Caco-2 (cell line): ENCODE measurements at regions of chr15 and their contacts with region 1.

Region 1: GRCh38 chr15:82809404-82810060 is at the start of gene WHAMM:
- DNase-seq: peak; percentile 97 to 98
- H3K4me3 ChIP-seq: peak within 1 kb of the TSS; percentile 87
- H3K4me3 Mint-ChIP-seq: peak within 1 kb of the TSS; percentile 87
- H3K27ac Mint-ChIP-seq: peak within 1 kb of the TSS; percentile 81
- H3K4me1 ChIP-seq: no peaks in the 10 kb centered on the region
- H3K4me1 Mint-ChIP-seq: peaks cover 9% of the 10 kb centered on the region
- H3K27me3 ChIP-seq: no peaks in the 10 kb centered on the region
- H3K27me3 Mint-ChIP-seq: no peaks in the 10 kb centered on the region
- CTCF ChIP-seq: no peak
- total RNA-seq, gene WHAMM: 7.4 and 7.8 TPM in 2 replicates

Region 2: GRCh38 chr15:82566690-82567089 is 242.8 kb before region 1 on chr15:
- CTCF ChIA-PET with region 1: no interaction called
- POLR2A ChIA-PET with region 1: no interaction called
- intact Hi-C with region 1: loop called (anchors 2 kb)
- DNase-seq: peak; percentile 40 to 63
- H3K4me3 ChIP-seq: no peak overlapping the region
- H3K4me3 Mint-ChIP-seq: peak overlapping the region; percentile 45
- H3K27ac Mint-ChIP-seq: peak overlapping the region; percentile 97
- H3K4me1 ChIP-seq: peaks cover 18% of the 10 kb centered on the region
- H3K4me1 Mint-ChIP-seq: peaks cover 31% of the 10 kb centered on the region
- H3K27me3 ChIP-seq: no peaks in the 10 kb centered on the region
- H3K27me3 Mint-ChIP-seq: no peaks in the 10 kb centered on the region
- CTCF ChIP-seq: no peak

Region 3: GRCh38 chr15:82749951-82750830 is 59.3 kb before region 1 on chr15:
- CTCF ChIA-PET with region 1: interaction called, 4 read pairs
- POLR2A ChIA-PET with region 1: interaction called, 16 read pairs
- intact Hi-C with region 1: loop called (anchors 1 kb)
- DNase-seq: peak; percentile 88 to 91
- H3K4me3 ChIP-seq: peak overlapping the region; percentile 61
- H3K4me3 Mint-ChIP-seq: peak overlapping the region; percentile 94
- H3K27ac Mint-ChIP-seq: peak overlapping the region; percentile 93
- H3K4me1 ChIP-seq: peaks cover 6% of the 10 kb centered on the region; the same call in 1 of the 2 replicates
- H3K4me1 Mint-ChIP-seq: no peaks in the 10 kb centered on the region
- H3K27me3 ChIP-seq: no peaks in the 10 kb centered on the region
- H3K27me3 Mint-ChIP-seq: no peaks in the 10 kb centered on the region
- CTCF ChIP-seq: no peak

Region 4: GRCh38 chr15:82985688-82986441 is 176.3 kb after region 1 on chr15 and contains the start of gene RAMAC:
- CTCF ChIA-PET with region 1: no interaction called
- POLR2A ChIA-PET with region 1: no interaction called
- intact Hi-C with region 1: loop called (anchors 10 kb)
- DNase-seq: peak; percentile 88 to 91
- H3K4me3 ChIP-seq: peak within 1 kb of the TSS; percentile 99
- H3K4me3 Mint-ChIP-seq: peak within 1 kb of the TSS; percentile 86
- H3K27ac Mint-ChIP-seq: peak within 1 kb of the TSS; percentile 88
- H3K4me1 ChIP-seq: peaks cover 5% of the 10 kb centered on the region
- H3K4me1 Mint-ChIP-seq: no peaks in the 10 kb centered on the region
- H3K27me3 ChIP-seq: no peaks in the 10 kb centered on the region
- H3K27me3 Mint-ChIP-seq: no peaks in the 10 kb centered on the region
- CTCF ChIP-seq: no peak
- total RNA-seq, gene RAMAC: 31.8 and 33.3 TPM in 2 replicates

Region 5: GRCh38 chr15:83011271-83012075 is 201.9 kb after region 1 on chr15 and contains the start of gene C15orf40:
- CTCF ChIA-PET with region 1: no interaction called
- POLR2A ChIA-PET with region 1: no interaction called
- intact Hi-C with region 1: loop called (anchors 5 kb)
- DNase-seq: peak; percentile 90 to 92
- H3K4me3 ChIP-seq: peak within 1 kb of the TSS; percentile 76
- H3K4me3 Mint-ChIP-seq: peak within 1 kb of the TSS; percentile 88
- H3K27ac Mint-ChIP-seq: peak within 1 kb of the TSS; percentile 67
- H3K4me1 ChIP-seq: peaks cover 6% of the 10 kb centered on the region
- H3K4me1 Mint-ChIP-seq: peaks cover 19% of the 10 kb centered on the region
- H3K27me3 ChIP-seq: no peaks in the 10 kb centered on the region
- H3K27me3 Mint-ChIP-seq: no peaks in the 10 kb centered on the region
- CTCF ChIP-seq: peak in 1 of 2 experiments; percentile 81
- total RNA-seq, gene C15orf40: 26.8 and 27.2 TPM in 2 replicates